B cell (primary cell): ENCODE measurements at regions of chr17 and their contacts with region 1.

Region 1: DNA sequence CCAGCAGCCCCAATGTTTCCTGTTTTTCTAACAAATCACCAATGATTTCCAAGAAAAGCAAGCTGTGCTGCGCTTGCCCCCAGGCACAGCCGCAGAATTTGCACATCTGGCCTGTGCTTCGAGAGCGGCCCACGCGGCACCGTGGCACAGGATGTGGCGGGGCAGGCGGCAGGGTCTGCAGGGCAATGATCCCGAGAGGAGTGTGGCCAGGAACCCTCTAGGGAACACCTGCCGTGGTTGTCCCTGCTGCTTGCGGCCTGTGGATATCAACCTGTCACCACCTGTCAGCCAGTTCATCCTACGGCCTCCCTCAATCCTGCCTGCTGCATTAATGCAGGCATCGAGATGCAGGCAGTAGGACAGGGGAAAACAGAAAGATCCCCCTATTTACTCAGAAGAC is 24.0 kb downstream of the PIK3R5 start:
- DNase-seq: peak; percentile 60
- ATAC-seq: peak; percentile 65
- H3K4me3 ChIP-seq: peak overlapping the region in 3 of 5 experiments; percentile 0 to 24 (median 18)
- H3K4me3 Mint-ChIP-seq: peak overlapping the region; percentile 81
- H3K27ac ChIP-seq: peak overlapping the region; percentile 60 to 69
- H3K27ac Mint-ChIP-seq: peak overlapping the region; percentile 91
- H3K4me1 ChIP-seq: peaks cover 29 to 47% of the 10 kb centered on the region in 2 donors
- H3K4me1 Mint-ChIP-seq: peaks cover 53% of the 10 kb centered on the region
- H3K27me3 ChIP-seq: no peaks in the 10 kb centered on the region
- H3K27me3 Mint-ChIP-seq: no peaks in the 10 kb centered on the region
- CTCF ChIP-seq: no peak

Region 2: DNA sequence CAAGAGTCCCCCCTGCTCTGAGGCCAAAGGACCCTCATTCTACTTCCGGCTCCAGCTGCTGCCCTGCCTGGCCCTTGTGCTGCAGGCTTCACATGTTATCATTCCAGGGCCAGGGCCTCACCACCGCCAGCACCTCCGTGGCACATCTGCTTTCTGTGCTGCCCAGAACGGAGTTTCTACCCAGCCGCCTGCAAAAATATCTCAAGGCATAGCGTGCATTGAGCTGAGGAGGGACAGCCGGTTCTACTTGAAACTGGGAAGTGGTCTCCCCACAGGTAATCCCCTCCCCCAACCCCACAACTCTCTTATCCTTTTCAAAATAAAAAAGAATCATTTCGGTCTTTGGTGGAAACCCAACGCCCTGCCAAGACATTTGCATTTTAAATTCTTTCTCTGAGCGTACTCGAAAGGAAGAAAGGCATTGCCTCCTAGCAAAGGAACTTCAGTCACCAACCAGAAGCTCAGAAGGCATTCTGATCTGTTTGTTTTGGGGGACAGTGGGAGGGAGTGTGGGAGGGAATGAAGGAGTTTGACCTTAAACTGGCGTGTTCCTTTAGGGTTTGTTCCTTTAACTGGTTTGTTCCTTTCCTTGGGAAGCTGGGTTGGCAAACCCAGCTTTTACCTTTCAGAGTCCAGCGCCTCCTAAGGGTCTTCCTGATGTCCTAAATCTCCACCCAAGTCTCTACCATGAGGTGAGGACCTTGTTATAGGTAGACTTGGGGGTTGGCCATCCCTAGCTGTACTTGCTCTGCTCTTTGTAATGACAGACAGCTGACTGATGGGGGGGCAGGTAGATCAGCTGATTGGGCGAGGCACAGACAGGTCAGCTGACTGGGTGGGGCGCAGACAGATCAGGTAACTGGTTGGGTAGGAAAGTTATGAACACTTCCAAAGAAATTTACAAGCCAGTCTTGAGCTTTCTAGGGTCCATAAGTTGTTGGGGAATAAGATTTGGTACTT is 40.6 kb before region 1 on chr17:
- CTCF ChIA-PET with region 1: interaction called, 5 read pairs
- POLR2A ChIA-PET with region 1: no interaction called
- intact Hi-C with region 1: loop called (anchors 5 kb)
- DNase-seq: peak; percentile 60
- ATAC-seq: peak; percentile 22
- H3K4me3 ChIP-seq: peak overlapping the region in 1 of 5 experiments; percentile 6
- H3K4me3 Mint-ChIP-seq: peak overlapping the region; percentile 63
- H3K27ac ChIP-seq: peak overlapping the region; percentile 56 to 81
- H3K27ac Mint-ChIP-seq: peak overlapping the region; percentile 86
- H3K4me1 ChIP-seq: peaks cover 48 to 54% of the 10 kb centered on the region in 2 donors
- H3K4me1 Mint-ChIP-seq: peaks cover 60% of the 10 kb centered on the region
- H3K27me3 ChIP-seq: no peaks in the 10 kb centered on the region
- H3K27me3 Mint-ChIP-seq: no peaks in the 10 kb centered on the region
- CTCF ChIP-seq: no peak

Region 3: GRCh38 chr17:8954339-8954738 is 12.8 kb after region 1 on chr17:
- CTCF ChIA-PET with region 1: interaction called, 11 read pairs
- POLR2A ChIA-PET with region 1: interaction called, 3 read pairs
- intact Hi-C with region 1: loop called (anchors 2 kb)
- DNase-seq: peak; percentile 88
- ATAC-seq: peak; percentile 99
- H3K4me3 ChIP-seq: peak overlapping the region in 3 of 5 experiments; percentile 8 to 31 (median 22)
- H3K4me3 Mint-ChIP-seq: peak overlapping the region; percentile 87
- H3K27ac ChIP-seq: peak overlapping the region; percentile 76 to 84
- H3K27ac Mint-ChIP-seq: peak overlapping the region; percentile 97
- H3K4me1 ChIP-seq: peaks cover 53 to 74% of the 10 kb centered on the region in 2 donors
- H3K4me1 Mint-ChIP-seq: peaks cover 85% of the 10 kb centered on the region
- H3K27me3 ChIP-seq: no peaks in the 10 kb centered on the region
- H3K27me3 Mint-ChIP-seq: no peaks in the 10 kb centered on the region
- CTCF ChIP-seq: no peak

Region 4: DNA sequence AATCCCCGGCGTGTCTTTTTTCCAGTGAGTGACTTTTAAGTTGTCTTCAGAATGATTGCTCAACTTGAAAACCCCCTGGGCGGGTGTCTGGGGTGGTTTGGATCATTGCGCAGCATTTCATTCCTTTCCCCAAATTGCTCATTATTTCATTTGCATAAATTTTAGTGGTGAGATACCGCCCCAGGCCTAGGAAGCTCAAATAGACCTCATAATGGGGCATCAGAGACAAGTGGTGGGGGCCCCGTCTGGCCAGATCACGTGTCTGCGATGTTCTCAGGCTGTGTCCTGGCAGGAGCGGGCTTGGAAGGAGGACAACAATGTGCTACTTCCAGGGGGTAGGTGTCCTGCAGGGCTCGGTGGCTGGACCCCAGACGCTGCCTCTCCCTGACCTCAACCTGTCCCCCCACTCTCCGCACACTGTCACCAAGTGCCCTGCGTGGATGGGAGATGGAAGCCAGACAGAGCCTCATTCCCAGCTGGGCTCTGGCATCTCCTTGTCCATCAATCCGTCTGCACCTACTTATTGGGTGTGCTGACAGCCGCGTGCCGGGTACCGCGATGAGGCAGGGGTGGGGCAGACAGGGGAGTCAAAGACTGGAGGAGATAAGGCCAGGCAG is 196.7 kb after region 1 on chr17:
- CTCF ChIA-PET with region 1: no interaction called
- POLR2A ChIA-PET with region 1: no interaction called
- intact Hi-C with region 1: no loop called
- DNase-seq: no peak
- ATAC-seq: no peak
- H3K4me3 ChIP-seq: no peak overlapping the region
- H3K4me3 Mint-ChIP-seq: no peak overlapping the region
- H3K27ac ChIP-seq: no peak overlapping the region
- H3K27ac Mint-ChIP-seq: no peak overlapping the region
- H3K4me1 ChIP-seq: no peaks in the 10 kb centered on the region
- H3K4me1 Mint-ChIP-seq: no peaks in the 10 kb centered on the region
- H3K27me3 ChIP-seq: no peaks in the 10 kb centered on the region
- H3K27me3 Mint-ChIP-seq: peaks cover 15% of the 10 kb centered on the region
- CTCF ChIP-seq: no peak